ENCODE measurements at regions of chr14 and their contacts with region 1.

Region 1: DNA sequence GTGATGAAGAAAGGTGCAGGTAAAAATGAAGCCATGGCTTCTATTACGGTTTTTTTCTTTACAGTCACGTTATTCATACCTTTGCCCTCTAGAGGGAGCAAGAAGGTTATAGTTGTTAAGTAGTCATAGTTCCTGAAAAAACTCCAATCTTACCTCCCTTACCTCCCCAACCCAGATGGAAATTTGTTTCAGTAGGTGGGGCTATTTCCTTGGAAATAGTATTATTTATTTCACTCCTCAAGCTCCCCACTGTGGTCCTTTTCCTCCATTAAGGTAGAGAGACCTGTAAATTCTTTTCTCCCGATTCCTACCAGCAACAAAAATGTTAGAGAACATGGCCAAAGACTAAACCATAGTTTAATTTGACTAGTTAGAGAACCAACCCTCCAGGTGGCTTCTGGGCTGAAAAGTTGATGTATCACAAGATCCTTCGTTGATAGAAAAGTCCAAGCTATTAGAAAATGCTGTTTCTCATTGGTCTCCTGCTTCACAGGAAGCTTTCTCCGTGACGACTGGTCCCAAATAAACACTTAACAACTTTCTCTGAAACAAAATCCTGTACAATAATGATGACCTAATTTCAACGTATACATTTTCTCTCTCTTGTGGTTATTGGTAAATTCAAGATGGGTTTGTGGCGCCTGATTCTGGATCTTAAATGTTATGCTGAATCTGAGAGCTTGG is 43.5 kb downstream of the TMX1 start:
- DNase-seq: peak; percentile 77
- H3K4me3 ChIP-seq: no peak overlapping the region
- CTCF ChIP-seq: peak; percentile 38

Region 2: GRCh38 chr14:51310505-51310944 is 27.0 kb after region 1 on chr14:
- CTCF ChIA-PET with region 1: no interaction called
- POLR2A ChIA-PET with region 1: no interaction called
- DNase-seq: no peak
- H3K4me3 ChIP-seq: no peak overlapping the region
- CTCF ChIP-seq: no peak

Region 3: GRCh38 chr14:51395361-51395849 is 111.9 kb after region 1 on chr14:
- CTCF ChIA-PET with region 1: interaction called, 10 read pairs
- POLR2A ChIA-PET with region 1: interaction called, 6 read pairs
- DNase-seq: peak; percentile 74
- H3K4me3 ChIP-seq: peak overlapping the region; percentile 13; the same call in 1 of the 2 replicates
- CTCF ChIP-seq: peak; percentile 2

Region 4: DNA sequence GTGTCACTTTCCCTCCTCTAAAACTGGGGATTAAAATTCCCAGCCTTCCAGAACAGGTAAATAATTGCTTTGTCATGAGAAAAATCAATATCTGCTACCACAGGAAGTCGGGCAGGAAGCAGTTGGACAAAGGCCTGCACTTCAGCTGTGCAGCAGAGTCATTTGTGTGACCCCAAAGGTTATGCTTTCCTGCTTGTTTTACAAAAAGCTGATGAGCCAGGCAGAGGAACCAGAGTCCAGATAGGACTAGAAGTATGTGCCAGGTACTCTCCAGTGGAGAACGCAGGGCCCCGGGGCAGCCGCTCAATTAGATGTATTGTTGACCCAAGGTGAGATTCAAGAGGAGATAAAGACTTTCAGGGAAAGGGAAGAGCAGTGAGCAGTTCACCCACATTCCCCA is 251.1 kb after region 1 on chr14:
- CTCF ChIA-PET with region 1: interaction called, 24 read pairs
- POLR2A ChIA-PET with region 1: no interaction called
- DNase-seq: no peak
- H3K4me3 ChIP-seq: no peak overlapping the region
- CTCF ChIP-seq: no peak

Region 5: GRCh38 chr14:51593397-51593796 is 309.9 kb after region 1 on chr14:
- CTCF ChIA-PET with region 1: interaction called, 21 read pairs
- POLR2A ChIA-PET with region 1: no interaction called
- DNase-seq: no peak
- H3K4me3 ChIP-seq: no peak overlapping the region
- CTCF ChIP-seq: no peak

Region 6: GRCh38 chr14:51663783-51664326 is 380.3 kb after region 1 on chr14:
- CTCF ChIA-PET with region 1: interaction called, 11 read pairs
- POLR2A ChIA-PET with region 1: no interaction called
- DNase-seq: no peak
- H3K4me3 ChIP-seq: no peak overlapping the region
- CTCF ChIP-seq: no peak

Region 7: DNA sequence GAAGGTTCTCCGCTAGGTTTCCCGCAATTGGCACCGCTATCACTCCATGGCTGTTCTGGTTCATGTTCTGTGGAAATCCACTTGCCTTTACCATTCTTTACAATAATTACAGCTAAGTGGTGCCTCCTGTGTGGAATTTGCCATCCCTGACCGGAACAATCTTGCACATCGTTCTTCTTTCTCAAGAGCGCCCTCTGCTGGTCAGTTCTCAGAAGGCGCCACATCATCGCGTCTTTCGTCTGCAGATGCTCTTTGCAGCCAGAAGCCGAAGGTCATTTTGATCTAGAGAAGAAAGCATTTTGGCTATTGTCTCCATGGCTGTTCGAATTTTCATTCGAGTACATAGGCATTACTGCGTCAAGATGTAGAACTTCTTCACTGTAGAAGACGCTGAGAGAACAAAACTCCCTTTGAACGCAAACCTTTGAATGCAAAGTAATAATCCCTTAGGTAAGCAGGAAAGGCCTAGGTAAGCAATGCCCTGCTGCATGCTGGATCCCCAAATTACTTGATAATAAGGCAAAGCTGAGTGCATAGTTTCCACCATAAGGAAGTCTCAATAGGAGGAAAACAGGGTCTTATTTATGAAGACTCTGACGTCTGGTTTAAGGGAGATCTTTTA is 695.7 kb after region 1 on chr14:
- CTCF ChIA-PET with region 1: interaction called, 35 read pairs
- POLR2A ChIA-PET with region 1: no interaction called
- DNase-seq: no peak
- H3K4me3 ChIP-seq: no peak overlapping the region
- CTCF ChIP-seq: peak; percentile 82

Measured in AG04449 (cell line).